ENCODE measurements at regions of chr19 and their contacts with region 1.

Region 1: DNA sequence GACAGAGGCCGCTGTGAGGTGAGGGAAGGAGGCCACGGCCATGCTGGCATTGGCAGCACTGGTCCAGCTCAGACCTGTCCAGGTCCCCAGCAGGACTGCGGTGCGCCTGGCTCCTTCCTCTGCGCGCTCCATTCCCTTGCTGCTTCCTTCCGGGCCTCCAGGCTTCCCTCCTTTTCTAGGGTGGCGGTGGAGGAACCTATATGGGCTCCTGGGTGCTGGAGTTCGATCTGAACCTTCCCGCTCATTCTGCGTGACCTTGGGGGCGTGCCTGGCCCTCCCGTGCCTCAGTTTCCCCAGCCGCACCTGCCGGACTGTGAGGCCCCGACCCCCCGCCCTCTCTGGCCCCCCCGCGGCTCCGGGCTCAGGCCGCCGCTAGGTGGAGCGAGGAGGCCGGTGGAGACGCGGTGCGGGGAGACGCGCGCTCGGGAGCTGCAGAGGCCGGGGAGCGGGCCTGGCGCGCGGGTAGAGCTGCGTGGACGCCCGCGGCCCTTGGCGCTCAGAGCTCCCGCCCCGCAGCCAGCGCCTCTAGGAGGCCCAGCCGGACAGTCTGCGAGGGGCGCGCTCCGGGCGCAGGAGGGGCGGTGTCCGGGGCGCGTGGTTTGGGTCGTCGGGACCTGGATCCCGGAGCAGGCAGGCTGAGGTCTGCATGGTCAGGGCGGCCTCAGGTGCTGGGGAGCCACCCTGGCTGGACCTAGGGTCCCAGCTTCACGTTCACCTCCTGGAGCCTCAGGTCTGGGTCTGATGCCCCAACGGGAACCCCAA is 30.0 kb downstream of the EFNA2 start:
- DNase-seq: peak; percentile 39 to 77 (median 52)
- ATAC-seq: peak; percentile 39 to 85 (median 80)
- H3K4me3 ChIP-seq: peak overlapping the region in 9 of 12 donors; percentile 7 to 41 (median 27)
- H3K27ac ChIP-seq: no peak overlapping the region
- H3K4me1 ChIP-seq: peaks cover 0 to 11% (median 5%) of the 10 kb centered on the region in 12 donors
- H3K27me3 ChIP-seq: peaks cover 8 to 69% (median 30%) of the 10 kb centered on the region in 9 donors
- CTCF ChIP-seq: peak; percentile 24 to 79 (median 62)
- POLR2A ChIP-seq: no peak

Region 2: GRCh38 chr19:1383311-1384084 is 67.8 kb after region 1 on chr19 and contains the start of gene NDUFS7:
- intact Hi-C with region 1: loop called in 1 of 10 experiments (anchors 5 kb)
- DNase-seq: peak; percentile 90 to 94 (median 92)
- ATAC-seq: peak; percentile 70 to 88 (median 85)
- H3K4me3 ChIP-seq: peak within 1 kb of the TSS; percentile 69 to 100 (median 88)
- H3K27ac ChIP-seq: peak within 1 kb of the TSS; percentile 92 to 99 (median 96)
- H3K4me1 ChIP-seq: peaks cover 2 to 54% (median 40%) of the 10 kb centered on the region in 12 donors
- H3K27me3 ChIP-seq: no peaks in the 10 kb centered on the region
- CTCF ChIP-seq: peak in 2 of 12 donors; percentile 4 to 8
- POLR2A ChIP-seq: peak; percentile 34 to 69
- total RNA-seq, gene NDUFS7: 205 to 717 (median 336) TPM

Region 3: DNA sequence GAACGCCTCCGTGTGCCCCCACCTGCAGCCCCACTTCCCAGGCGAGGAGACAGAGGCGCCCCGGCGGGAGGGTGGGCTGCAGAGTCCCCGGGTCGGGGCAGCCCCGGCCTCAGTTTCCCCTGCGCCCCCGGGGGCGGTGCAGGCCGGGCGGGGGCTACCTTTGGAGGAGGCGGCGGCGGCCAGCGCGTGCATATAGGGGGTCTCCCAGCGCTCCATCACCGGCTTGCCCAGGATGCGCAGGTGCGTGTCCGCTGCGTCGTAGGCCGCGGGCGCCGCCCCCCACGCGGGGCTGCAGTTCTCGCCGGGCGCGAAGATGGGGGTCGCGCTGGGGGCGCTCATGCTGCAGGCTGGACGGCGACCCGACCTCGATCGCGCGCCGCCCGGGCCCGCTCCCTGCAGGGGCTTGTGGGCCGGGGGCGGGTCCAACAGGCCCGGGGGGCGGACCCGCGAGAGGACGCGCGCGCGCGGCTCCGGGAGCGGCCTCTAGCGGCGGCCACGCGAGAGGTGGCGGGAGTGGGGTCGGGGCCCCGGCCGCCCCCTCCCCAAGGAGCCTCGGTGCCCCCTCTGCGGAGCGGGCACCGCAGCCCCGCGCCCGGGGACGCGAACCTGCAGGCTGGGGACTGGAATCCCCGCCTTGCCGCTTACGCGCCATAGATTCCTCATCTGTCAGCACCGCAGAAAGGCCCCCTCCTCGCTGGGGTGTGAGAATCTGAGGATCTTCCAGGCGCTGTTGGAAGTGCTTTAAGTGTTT is 85.7 kb after region 1 on chr19 and contains the start of gene GAMT:
- intact Hi-C with region 1: loop called in 1 of 10 experiments (anchors 5 kb)
- DNase-seq: peak in 4 of 5 donors; percentile 58 to 79 (median 64)
- ATAC-seq: peak in 3 of 4 donors; percentile 21 to 71 (median 60)
- H3K4me3 ChIP-seq: peak within 1 kb of the TSS; percentile 59 to 78 (median 72)
- H3K27ac ChIP-seq: peak within 1 kb of the TSS; percentile 40 to 87 (median 76)
- H3K4me1 ChIP-seq: peaks cover 5 to 36% (median 23%) of the 10 kb centered on the region in 12 donors
- H3K27me3 ChIP-seq: peaks cover 0 to 25% (median 0%) of the 10 kb centered on the region in 9 donors
- CTCF ChIP-seq: peak; percentile 20 to 80 (median 66)
- POLR2A ChIP-seq: peak in 1 of 2 donors; percentile 33
- total RNA-seq, gene GAMT: 35.9 to 167 (median 62.5) TPM

Region 4: DNA sequence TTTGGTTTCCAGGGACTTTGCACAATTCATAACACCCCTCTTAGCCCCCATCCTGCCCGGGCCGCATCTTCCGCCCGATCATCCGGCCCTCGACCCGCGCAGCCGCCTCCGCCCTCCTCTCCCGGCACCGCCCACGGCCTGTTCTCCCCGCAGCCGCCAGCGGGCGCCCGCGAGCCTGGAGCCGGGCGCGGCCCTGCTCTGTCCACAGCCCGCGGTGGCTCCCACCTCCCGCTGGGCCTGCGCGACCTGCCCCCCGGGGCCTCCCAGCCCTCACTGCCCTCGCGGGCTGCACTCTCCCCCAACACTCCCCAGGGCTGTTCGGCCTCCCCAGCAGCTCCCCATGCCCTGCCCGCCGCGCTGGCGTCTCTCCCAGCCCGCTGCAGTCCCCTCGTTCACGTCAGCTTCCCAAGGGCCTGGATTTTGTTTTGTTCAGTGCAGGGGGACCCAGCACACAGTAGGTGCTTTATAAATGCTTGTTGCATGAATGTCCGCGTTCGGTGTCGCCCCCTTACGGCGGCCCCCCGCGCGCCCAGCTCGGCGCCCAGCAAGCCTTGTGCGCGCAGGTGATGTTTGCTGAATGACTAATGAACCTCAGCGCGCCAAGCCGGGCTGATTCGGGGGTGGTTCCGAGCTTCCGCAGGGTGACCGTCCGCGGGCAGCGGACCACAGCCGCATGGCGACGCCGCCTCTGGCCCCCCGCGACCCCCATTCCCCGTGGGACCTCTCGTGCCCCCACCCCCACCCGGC is 129.7 kb after region 1 on chr19:
- intact Hi-C with region 1: loop called in 2 of 10 experiments (anchors 10 kb)
- DNase-seq: peak; percentile 60 to 89 (median 70)
- ATAC-seq: peak; percentile 23 to 91 (median 88)
- H3K4me3 ChIP-seq: peak overlapping the region in 11 of 12 donors; percentile 16 to 53 (median 41)
- H3K27ac ChIP-seq: no peak overlapping the region
- H3K4me1 ChIP-seq: peaks cover 0 to 43% (median 15%) of the 10 kb centered on the region in 12 donors
- H3K27me3 ChIP-seq: peaks cover 36 to 52% (median 49%) of the 10 kb centered on the region in 9 donors
- CTCF ChIP-seq: peak; percentile 85 to 98 (median 94)
- POLR2A ChIP-seq: no peak

Region 5: GRCh38 chr19:1455336-1456120 is 139.9 kb after region 1 on chr19:
- intact Hi-C with region 1: loop called in 1 of 10 experiments (anchors 10 kb)
- DNase-seq: peak in 2 of 5 donors; percentile 29 to 72
- ATAC-seq: peak in 3 of 4 donors; percentile 29 to 55 (median 52)
- H3K4me3 ChIP-seq: no peak overlapping the region
- H3K27ac ChIP-seq: no peak overlapping the region
- H3K4me1 ChIP-seq: peaks cover 0 to 46% (median 20%) of the 10 kb centered on the region in 12 donors
- H3K27me3 ChIP-seq: peaks cover 46 to 82% (median 63%) of the 10 kb centered on the region in 9 donors
- CTCF ChIP-seq: no peak
- POLR2A ChIP-seq: no peak

Measured in heart left ventricle (tissue), 16 donors.